ENCODE measurements at regions of chr7 and their contacts with region 1.

Region 1: GRCh38 chr7:157490457-157490912 is 153.7 kb downstream of the DNAJB6 start:
- DNase-seq: peak; percentile 67
- H3K4me3 Mint-ChIP-seq: no peak overlapping the region
- H3K27ac Mint-ChIP-seq: peak overlapping the region; percentile 69
- H3K4me1 Mint-ChIP-seq: peaks cover 55% of the 10 kb centered on the region
- H3K27me3 Mint-ChIP-seq: peaks cover 16% of the 10 kb centered on the region

Region 2: DNA sequence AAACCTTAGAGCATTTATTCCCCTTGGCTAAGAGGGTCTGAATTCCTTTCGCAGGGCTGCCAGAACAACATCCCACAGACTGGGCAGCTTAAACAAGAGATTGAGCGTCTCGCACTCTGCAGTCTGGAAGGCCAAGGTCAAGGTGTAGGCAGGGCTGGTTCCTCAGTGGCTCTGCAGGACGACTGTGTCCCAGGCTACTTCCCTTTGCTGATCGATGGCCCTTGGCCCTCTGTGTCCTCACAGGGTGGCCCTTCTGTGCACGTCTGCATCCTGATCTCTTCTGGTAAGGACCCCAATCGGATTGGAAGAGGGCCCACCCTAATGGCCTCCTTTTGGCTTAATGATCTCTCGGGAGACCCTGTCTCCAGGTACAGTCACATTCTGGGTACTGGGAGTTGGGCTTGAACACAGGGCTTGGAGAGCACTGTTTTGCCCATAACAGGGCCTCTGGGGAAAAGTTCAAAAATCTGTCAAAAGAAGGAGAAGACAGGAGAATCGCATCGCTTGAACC is 188.8 kb before region 1 on chr7:
- intact Hi-C with region 1: loop called (anchors 1 kb)
- DNase-seq: no peak
- H3K4me3 Mint-ChIP-seq: peak overlapping the region; percentile 32
- H3K27ac Mint-ChIP-seq: peak overlapping the region; percentile 98
- H3K4me1 Mint-ChIP-seq: peaks cover 44% of the 10 kb centered on the region
- H3K27me3 Mint-ChIP-seq: no peaks in the 10 kb centered on the region

Region 3: GRCh38 chr7:157474689-157475088 is 15.8 kb before region 1 on chr7:
- intact Hi-C with region 1: loop called (anchors 1 kb)
- DNase-seq: no peak
- H3K4me3 Mint-ChIP-seq: no peak overlapping the region
- H3K27ac Mint-ChIP-seq: no peak overlapping the region
- H3K4me1 Mint-ChIP-seq: peaks cover 52% of the 10 kb centered on the region
- H3K27me3 Mint-ChIP-seq: no peaks in the 10 kb centered on the region

Region 4: DNA sequence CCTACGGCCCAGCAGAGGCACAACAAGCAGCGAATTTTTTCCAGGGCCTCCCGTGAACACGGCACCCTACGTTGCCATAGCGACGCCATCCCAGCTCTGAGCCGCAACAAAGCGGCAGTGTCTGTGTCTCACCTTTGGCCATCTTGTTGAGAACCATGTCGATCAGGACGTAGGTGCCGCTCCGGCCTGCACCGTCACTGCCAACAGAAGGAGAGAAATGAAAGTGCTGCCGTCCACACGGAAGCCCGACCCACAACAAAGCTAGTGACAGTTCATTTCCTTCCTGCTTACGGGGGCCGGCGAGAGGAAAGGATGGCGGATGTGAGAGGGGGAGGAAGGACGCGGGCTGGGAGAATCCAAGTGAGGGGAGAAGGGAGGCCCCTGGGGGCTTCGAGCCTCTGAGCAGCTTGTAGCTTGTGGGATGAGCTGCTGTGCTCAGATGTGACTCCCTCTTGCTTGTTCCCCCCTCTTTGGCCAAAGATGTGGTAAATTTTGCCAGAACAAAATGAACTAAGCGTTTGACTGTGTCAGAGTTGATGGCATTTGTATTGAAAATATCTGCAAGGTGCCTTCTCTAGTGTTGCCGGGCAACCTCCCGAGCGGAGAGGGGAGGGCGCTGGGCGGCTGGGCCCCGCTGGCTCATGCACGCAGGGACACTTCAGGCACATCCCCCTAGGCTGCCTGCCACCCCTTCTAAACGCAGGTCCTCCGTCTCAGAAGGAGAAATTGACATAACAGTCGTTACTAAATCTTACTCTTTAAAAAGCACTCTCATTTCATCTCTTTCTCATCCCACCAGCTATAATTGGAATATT is 78.5 kb after region 1 on chr7:
- intact Hi-C with region 1: loop called (anchors 2 kb)
- DNase-seq: peak; percentile 40
- H3K4me3 Mint-ChIP-seq: peak overlapping the region; percentile 83
- H3K27ac Mint-ChIP-seq: peak overlapping the region; percentile 74
- H3K4me1 Mint-ChIP-seq: peaks cover 38% of the 10 kb centered on the region
- H3K27me3 Mint-ChIP-seq: peaks cover 4% of the 10 kb centered on the region